ENCODE measurements at regions of chr15 and their contacts with region 1.

Region 1: DNA sequence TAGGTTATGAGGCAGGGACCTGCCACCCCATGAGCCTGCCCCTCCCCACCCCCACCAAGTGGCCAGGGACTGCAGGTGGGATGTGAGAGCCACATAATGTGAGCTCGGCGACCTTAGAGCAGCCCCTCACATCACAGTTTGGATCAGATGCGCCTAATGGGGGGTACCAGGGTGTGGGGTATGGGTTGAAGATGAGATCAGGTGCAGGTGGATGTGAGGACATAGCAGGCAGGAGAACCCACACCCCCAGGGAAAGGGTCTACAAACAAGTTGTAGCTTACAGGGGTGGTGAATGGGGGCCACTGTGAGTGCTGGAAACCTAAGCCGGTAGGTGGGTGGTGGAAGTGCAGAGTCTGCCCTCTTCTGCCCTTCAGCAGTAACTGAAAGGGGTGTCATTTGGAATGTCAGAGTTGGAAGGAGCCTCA is 94.0 kb downstream of the CORO2B start:
- DNase-seq: no peak
- H3K4me3 ChIP-seq: no peak overlapping the region
- H3K27ac ChIP-seq: no peak overlapping the region
- H3K4me1 ChIP-seq: peaks cover 13% of the 10 kb centered on the region
- H3K27me3 ChIP-seq: no peaks in the 10 kb centered on the region
- CTCF ChIP-seq: no peak
- POLR2A ChIP-seq: no peak

Region 2: DNA sequence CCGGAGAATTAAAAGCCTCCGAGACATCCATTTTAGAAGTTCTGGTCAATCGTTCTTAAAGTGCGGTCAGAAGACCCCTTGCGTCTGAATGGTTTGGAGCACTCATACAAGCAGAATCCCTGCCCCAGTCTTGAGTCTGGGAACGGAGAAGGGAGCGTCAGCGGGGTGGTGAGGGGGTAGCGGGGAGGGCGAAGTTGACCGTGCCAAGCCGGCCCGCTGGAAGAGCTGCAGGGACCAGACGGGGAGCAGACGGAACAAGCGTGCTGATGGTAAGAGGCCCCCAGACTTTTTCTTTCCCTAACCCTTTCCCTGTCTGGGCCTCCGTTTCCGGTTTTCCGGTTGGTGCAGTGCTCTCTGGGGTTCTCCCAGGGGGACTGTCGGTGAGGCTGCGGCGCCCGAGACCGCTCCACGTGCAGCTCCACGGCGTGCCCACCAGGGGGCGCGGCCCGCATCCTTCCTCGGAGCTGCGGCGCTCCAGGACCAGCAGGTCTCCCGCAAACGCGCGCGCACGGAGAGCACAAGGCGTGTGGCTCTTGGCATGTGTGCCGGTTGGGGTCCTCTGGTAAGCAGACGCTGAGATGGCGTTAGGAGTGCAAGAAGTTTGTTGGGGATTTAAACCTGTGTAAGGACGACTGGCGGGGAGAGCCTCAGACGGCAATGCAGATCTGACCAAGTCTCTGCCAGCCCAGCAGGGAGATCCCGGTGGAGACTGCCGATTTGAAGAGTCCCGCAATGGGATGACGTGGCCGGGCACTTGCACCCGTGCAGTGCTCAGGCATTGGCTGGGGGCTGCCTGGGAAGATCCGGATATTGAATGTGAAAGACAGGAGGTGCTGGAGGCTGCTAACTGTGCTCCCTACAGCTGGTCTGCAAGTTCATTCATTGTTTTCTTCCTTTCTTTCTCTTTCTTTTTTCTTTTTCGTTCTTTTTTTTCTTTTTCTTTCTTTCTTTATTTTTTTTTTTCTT is 113.2 kb before region 1 on chr15:
- intact Hi-C with region 1: loop called (anchors 5 kb)
- DNase-seq: peak; percentile 88
- H3K4me3 ChIP-seq: peak overlapping the region; percentile 45 to 51
- H3K27ac ChIP-seq: no peak overlapping the region
- H3K4me1 ChIP-seq: no peaks in the 10 kb centered on the region
- H3K27me3 ChIP-seq: no peaks in the 10 kb centered on the region
- CTCF ChIP-seq: peak; percentile 97 to 98 (median 98)
- POLR2A ChIP-seq: no peak

Region 3: DNA sequence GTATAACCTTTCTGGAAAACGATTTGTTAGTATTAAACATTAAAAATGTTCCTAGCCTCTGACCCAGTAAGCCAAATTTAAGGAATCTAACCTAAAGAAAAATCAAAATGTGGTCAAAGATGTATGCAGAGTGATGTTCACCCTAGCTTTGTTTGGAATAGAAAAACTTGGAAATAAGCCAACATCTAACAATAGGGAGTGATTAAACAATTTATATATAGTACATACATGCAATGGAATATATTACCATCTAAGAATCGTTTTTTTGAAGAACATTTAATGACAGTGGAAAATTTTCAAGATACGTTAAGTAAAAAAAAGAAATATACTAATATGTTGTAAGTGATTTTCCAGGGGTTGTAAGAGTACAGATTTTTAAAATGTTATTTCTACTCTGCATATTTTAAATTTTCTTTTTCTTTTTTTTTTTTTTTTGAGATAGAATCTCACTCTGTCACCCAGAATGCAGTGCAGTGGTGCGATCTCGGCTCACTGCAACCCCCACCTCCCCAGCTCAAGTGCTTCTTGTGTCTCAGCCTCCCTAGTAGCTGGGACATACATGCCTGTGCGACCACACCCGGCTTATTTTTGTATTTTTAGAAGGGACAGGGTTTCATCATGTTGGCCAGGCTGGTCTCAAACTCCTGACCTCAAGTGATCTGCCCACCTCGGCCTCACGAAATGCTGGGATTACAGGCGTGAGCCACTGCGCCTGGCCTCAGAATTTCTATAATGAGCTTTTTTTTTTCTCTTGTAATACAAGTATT is 93.0 kb after region 1 on chr15:
- intact Hi-C with region 1: no loop called
- DNase-seq: no peak
- H3K4me3 ChIP-seq: no peak overlapping the region
- H3K27ac ChIP-seq: no peak overlapping the region
- H3K4me1 ChIP-seq: no peaks in the 10 kb centered on the region
- H3K27me3 ChIP-seq: no peaks in the 10 kb centered on the region
- CTCF ChIP-seq: no peak
- POLR2A ChIP-seq: no peak

Region 4: GRCh38 chr15:68875377-68876116 is 202.8 kb after region 1 on chr15:
- intact Hi-C with region 1: loop called (anchors 10 kb)
- DNase-seq: peak; percentile 97
- H3K4me3 ChIP-seq: peak overlapping the region in 1 of 2 donors; percentile 15
- H3K27ac ChIP-seq: no peak overlapping the region
- H3K4me1 ChIP-seq: peaks cover 5% of the 10 kb centered on the region
- H3K27me3 ChIP-seq: no peaks in the 10 kb centered on the region
- CTCF ChIP-seq: peak; percentile 90 to 96 (median 93)
- POLR2A ChIP-seq: no peak

Measured in testis (tissue), 5 donors.